ENCODE measurements at regions of chr10 and their contacts with region 1.

Region 1: GRCh38 chr10:110192552-110192951 is 14.9 kb upstream of the MXI1 start:
- DNase-seq: no peak
- H3K4me3 Mint-ChIP-seq: no peak overlapping the region
- H3K27ac Mint-ChIP-seq: no peak overlapping the region
- H3K4me1 Mint-ChIP-seq: peaks cover 3% of the 10 kb centered on the region
- H3K27me3 Mint-ChIP-seq: peaks cover 52% of the 10 kb centered on the region

Region 2: DNA sequence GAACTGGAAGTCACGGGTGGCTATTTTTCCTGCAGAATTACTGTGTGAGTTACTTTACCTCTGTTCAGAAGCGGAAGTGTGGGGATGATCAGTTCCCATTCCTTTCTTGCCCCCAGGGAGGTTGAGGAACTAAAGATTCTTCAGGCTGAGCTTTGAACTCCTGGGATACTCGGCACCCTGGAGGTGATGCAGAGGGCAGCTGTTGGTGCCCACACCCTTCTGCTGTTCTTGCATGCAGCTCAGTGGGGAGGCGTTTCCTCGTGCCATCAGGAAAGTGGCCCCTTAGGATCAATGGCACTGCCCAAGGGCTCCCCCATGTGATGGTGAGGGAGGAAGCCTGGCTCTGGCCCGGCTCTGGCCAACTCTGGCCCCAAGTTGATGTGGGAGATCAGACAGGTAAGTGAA is 29.8 kb before region 1 on chr10:
- intact Hi-C with region 1: loop called (anchors 2 kb)
- DNase-seq: no peak
- H3K4me3 Mint-ChIP-seq: no peak overlapping the region
- H3K27ac Mint-ChIP-seq: no peak overlapping the region
- H3K4me1 Mint-ChIP-seq: peaks cover 22% of the 10 kb centered on the region
- H3K27me3 Mint-ChIP-seq: peaks cover 85% of the 10 kb centered on the region